ENCODE measurements at regions of chr18 and their contacts with region 1.

Region 1: DNA sequence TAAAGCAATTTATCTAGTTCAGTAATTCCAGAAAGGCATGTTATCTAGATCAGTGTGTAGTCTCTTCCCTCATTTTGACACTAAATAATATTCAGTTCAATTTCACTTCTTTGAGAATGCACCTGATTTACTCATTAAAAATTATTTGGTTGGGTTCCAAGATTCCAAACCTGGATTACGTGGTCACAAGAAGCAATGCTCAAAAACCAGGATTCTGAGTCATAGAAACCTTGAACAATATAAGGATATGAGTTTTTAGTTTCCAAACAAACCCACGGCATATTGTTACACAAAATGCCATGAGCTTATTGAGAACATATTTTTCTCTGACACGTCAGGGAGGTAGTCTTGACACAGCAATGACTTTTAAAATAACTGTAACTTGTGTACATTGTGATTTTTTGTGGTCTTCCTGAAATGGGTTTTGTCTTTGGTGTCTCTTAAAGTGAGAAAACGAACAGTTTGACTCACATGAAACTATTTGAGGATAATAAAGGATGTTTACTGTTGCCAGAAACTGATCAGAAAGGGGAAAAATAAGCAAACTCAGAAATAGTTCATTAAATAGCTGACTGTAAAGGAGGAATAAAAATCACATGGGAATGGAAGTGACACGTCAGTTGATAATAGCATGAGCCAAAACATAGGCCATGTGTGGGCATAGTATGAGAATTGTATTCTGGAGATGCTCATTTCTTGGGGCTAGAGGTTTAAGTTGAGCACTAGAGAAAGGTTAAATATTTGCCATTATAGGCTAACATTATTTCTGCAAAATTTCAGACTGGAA is 617.7 kb upstream of the CDH2 start:
- DNase-seq: peak; percentile 93
- H3K4me3 ChIP-seq: no peak overlapping the region
- H3K27ac ChIP-seq: peak overlapping the region; percentile 99
- H3K4me1 ChIP-seq: peaks cover 76% of the 10 kb centered on the region
- H3K27me3 ChIP-seq: no peaks in the 10 kb centered on the region
- CTCF ChIP-seq: no peak
- POLR2A ChIP-seq: no peak

Region 2: DNA sequence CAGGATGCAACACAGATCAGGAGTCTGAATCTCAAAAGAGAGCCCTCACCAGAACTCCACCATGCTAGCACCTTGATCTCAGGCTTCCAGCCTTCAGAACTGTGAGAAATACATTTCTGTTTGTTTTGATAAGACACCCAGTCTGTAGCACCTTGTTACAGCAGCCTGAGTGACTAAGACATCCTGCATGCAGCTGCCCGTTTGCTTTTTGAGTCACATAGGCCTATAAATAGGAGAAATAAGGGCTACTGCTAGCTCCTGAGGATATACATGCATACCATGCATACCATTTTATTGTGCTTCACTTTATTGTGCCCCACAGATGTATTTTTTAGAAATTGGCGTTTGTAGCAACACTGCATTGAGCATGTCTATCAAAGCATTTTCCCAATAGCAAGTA is 955.5 kb before region 1 on chr18:
- CTCF ChIA-PET with region 1: no interaction called
- POLR2A ChIA-PET with region 1: no interaction called
- dilution Hi-C with region 1: no loop called
- intact Hi-C with region 1: loop called (anchors 10 kb)
- DNase-seq: peak; percentile 89
- H3K4me3 ChIP-seq: no peak overlapping the region
- H3K27ac ChIP-seq: peak overlapping the region; percentile 88
- H3K4me1 ChIP-seq: peaks cover 34% of the 10 kb centered on the region
- H3K27me3 ChIP-seq: no peaks in the 10 kb centered on the region
- CTCF ChIP-seq: no peak
- POLR2A ChIP-seq: no peak

Region 3: DNA sequence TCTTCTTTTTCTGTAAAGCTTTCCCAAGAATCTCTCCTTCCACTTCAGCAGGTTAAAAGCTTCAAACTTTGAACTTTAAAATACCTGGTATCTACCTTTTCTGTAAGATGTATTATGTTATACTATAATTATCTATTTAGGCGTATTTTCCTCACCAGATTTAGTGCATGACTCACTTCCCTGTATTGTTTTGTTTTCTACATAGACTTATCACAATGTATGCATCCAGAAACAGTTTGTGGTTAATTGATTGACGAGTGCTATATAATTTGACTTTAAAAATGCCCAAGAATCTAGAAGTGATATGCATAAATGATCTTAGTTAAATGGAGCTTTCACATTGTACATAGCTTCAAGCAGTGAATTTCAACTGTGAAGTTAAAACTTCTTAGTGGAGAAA is 143.8 kb before region 1 on chr18:
- CTCF ChIA-PET with region 1: no interaction called
- POLR2A ChIA-PET with region 1: no interaction called
- dilution Hi-C with region 1: no loop called
- intact Hi-C with region 1: loop called (anchors 1 kb)
- DNase-seq: peak; percentile 59
- H3K4me3 ChIP-seq: no peak overlapping the region
- H3K27ac ChIP-seq: no peak overlapping the region
- H3K4me1 ChIP-seq: peaks cover 6% of the 10 kb centered on the region
- H3K27me3 ChIP-seq: no peaks in the 10 kb centered on the region
- CTCF ChIP-seq: no peak
- POLR2A ChIP-seq: no peak

Region 4: GRCh38 chr18:28767727-28768211 is 26.9 kb before region 1 on chr18:
- CTCF ChIA-PET with region 1: interaction called, 6 read pairs
- POLR2A ChIA-PET with region 1: no interaction called
- dilution Hi-C with region 1: no loop called
- intact Hi-C with region 1: loop called (anchors 1 kb)
- DNase-seq: peak; percentile 75
- H3K4me3 ChIP-seq: no peak overlapping the region
- H3K27ac ChIP-seq: peak overlapping the region; percentile 65
- H3K4me1 ChIP-seq: peaks cover 33% of the 10 kb centered on the region
- H3K27me3 ChIP-seq: no peaks in the 10 kb centered on the region
- CTCF ChIP-seq: no peak
- POLR2A ChIP-seq: no peak

Region 5: DNA sequence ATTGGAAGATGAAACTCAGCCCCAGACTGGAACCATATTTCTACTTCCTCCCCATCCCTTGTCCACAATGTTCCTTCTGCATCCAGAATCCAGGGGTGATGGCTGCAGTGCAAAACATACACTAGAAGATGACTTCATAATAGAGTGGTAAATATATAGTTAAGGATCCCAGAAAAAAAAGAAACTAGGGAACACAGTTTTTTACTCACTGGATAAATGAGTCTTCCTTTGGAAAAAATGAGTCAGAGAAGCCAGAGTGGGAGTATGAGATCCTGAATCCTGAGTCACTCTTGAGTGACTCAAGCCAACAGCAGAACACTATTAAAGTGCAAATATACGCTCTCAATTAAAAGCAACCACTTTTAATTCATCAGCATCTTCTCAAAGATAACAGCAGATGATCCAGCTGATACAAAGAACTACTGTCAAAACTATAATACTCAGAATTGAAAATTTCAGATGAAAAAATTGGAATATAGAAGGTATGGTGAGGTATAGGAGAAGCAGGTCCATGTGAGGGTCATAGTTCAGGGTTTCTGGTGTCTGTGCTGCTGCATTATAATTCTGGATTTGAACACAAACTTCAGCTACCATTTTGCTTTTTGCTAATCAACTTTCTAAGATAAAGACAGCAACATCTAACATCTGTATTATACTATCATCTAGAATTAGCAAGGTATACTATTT is 369.5 kb after region 1 on chr18:
- CTCF ChIA-PET with region 1: no interaction called
- POLR2A ChIA-PET with region 1: interaction called, 3 read pairs
- dilution Hi-C with region 1: no loop called
- intact Hi-C with region 1: loop called (anchors 1 kb)
- DNase-seq: peak; percentile 91
- H3K4me3 ChIP-seq: peak overlapping the region in 1 of 3 experiments; percentile 27
- H3K27ac ChIP-seq: peak overlapping the region; percentile 100
- H3K4me1 ChIP-seq: peaks cover 53% of the 10 kb centered on the region
- H3K27me3 ChIP-seq: no peaks in the 10 kb centered on the region
- CTCF ChIP-seq: no peak
- POLR2A ChIP-seq: peak; percentile 62